ENCODE measurements at regions of chr1 and their contacts with region 1.

Region 1: DNA sequence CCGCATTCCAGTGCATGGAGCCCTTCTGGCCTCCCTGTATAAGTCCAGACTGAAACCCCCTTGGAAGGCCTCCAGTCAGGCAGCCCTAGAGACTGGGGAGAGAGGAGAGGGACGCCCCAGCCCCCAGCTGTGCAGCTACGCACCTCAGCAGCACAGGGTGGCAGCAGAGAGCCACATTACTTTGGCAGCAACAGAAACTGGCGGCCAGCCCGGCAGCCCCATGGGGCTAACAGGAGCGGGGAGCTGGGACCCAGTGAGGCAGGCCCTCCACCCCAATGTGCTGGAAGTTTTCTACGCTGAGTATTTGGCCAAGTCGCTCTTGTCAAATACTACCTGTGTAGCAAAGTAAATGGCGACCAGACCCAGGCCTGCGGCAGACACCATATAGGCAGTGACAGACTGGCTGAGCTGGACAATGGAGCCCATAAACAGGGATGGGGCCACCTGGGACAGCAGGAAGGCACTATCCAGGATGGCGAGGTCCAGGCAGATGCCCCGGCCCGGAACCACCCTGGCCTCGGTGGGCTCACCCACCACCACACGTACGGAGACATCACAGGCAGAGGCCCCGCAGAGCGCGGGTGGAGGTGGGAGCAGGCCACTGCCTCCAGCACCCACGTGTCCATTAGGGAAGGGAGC is 21.2 kb downstream of the SLC45A3 start:
- DNase-seq: peak; percentile 70
- H3K4me3 ChIP-seq: no peak overlapping the region
- H3K27ac ChIP-seq: no peak overlapping the region
- H3K4me1 ChIP-seq: peaks cover 16% of the 10 kb centered on the region
- H3K27me3 ChIP-seq: no peaks in the 10 kb centered on the region
- CTCF ChIP-seq: peak; percentile 89 to 91
- POLR2A ChIP-seq: no peak

Region 2: DNA sequence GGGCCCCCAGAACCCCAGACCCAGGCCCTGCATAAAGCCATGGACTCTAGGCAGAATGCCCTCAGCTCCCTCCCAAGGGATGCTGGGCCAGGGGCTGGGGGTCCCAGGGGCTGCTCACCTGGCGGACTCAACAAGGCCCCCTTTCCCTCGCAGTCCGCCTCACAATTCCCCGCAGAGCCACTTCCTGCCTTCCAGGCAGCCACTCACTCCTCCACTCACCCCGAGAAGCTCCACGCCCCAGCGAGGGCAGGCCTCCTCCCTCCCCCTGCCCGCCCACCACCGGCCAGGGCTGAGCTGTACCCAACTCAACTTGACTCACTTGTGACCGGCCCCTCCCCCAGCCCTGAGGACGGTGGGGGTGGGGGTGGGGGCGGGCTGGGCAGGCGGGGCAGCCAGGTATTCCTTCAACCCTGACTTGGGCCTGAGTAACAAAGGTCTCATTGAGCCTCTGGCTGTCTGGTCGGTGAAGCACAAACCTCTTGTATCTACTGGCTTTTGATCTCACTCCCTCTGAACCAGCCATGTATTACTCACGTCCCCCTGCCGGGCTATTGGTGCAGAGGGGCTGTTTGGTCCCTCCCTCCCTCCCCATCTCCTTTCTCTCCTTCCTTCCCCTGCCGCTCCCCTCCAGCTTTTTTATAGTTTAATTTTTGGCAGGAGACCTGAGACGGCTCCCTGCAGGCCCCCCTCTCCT is 209.2 kb before region 1 on chr1:
- CTCF ChIA-PET with region 1: no interaction called
- POLR2A ChIA-PET with region 1: no interaction called
- dilution Hi-C with region 1: no loop called
- intact Hi-C with region 1: no loop called
- DNase-seq: no peak
- H3K4me3 ChIP-seq: no peak overlapping the region
- H3K27ac ChIP-seq: no peak overlapping the region
- H3K4me1 ChIP-seq: no peaks in the 10 kb centered on the region
- H3K27me3 ChIP-seq: peaks cover 42 to 44% of the 10 kb centered on the region in 2 experiments
- CTCF ChIP-seq: no peak
- POLR2A ChIP-seq: no peak

Region 3: DNA sequence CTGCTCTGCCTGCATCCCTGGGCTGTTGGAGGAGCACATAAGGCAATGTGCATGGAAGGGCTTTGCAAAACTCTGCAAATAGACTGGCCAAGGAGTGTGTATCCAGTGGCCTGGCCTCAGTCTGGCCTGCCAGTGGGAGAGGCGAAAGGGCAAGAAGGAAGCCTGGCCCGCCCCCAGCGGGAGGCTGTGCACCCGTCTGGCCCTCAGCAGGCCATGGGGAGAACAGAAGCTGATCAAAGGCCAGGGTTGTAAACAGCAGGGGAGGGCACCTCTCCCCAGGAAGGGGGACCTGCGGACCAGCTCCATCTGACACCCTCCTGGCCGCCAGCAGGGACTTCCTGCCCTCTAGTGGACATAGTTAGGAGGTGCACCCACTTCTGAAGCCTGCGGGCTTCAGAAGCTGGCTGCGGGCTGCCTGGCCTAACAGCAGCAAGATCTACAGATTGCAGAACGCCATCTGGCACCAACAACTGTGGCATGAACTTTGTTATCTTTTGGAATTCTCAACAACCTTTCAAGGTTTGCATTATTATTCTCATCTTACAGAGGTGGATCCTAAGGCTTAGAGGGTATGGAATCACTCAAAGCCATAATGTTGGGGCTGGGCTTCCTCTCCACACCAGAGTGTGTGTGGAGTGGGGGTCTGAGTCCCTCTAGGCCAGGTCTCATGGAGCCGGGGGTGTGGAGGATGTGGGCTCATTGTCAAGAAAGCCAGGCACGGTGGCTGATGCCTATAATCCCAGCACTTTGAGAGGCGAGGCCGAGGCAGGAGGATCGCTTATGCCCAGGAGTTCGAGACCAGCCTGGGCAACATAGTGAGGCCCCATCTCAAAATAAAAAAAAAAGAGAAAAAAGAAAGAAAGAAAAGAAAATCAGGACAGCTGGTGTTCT is 173.5 kb before region 1 on chr1:
- CTCF ChIA-PET with region 1: interaction called, 33 read pairs
- POLR2A ChIA-PET with region 1: no interaction called
- dilution Hi-C with region 1: no loop called
- intact Hi-C with region 1: loop called (anchors 1 kb)
- DNase-seq: peak; percentile 55
- H3K4me3 ChIP-seq: no peak overlapping the region
- H3K27ac ChIP-seq: no peak overlapping the region
- H3K4me1 ChIP-seq: no peaks in the 10 kb centered on the region
- H3K27me3 ChIP-seq: peaks cover 7 to 13% of the 10 kb centered on the region in 2 experiments
- CTCF ChIP-seq: peak; percentile 85 to 96
- POLR2A ChIP-seq: no peak

Region 4: GRCh38 chr1:205578780-205579606 is 80.1 kb before region 1 on chr1:
- CTCF ChIA-PET with region 1: interaction called, 23 read pairs
- POLR2A ChIA-PET with region 1: no interaction called
- dilution Hi-C with region 1: no loop called
- intact Hi-C with region 1: no loop called
- DNase-seq: no peak
- H3K4me3 ChIP-seq: no peak overlapping the region
- H3K27ac ChIP-seq: no peak overlapping the region
- H3K4me1 ChIP-seq: peaks cover 19% of the 10 kb centered on the region
- H3K27me3 ChIP-seq: peaks cover 10 to 19% of the 10 kb centered on the region in 2 experiments
- CTCF ChIP-seq: no peak
- POLR2A ChIP-seq: no peak

Region 5: GRCh38 chr1:205600085-205600484 is 59.0 kb before region 1 on chr1:
- CTCF ChIA-PET with region 1: interaction called, 615 read pairs
- POLR2A ChIA-PET with region 1: interaction called, 8 read pairs
- dilution Hi-C with region 1: no loop called
- intact Hi-C with region 1: no loop called
- DNase-seq: peak; percentile 94
- H3K4me3 ChIP-seq: peak overlapping the region in 1 of 3 experiments; percentile 12
- H3K27ac ChIP-seq: peak overlapping the region; percentile 98
- H3K4me1 ChIP-seq: peaks cover 41% of the 10 kb centered on the region
- H3K27me3 ChIP-seq: no peaks in the 10 kb centered on the region
- CTCF ChIP-seq: peak; percentile 16 to 23
- POLR2A ChIP-seq: no peak

Region 6: GRCh38 chr1:205680073-205680851 is 21.2 kb after region 1 on chr1 and contains the start of gene SLC45A3:
- CTCF ChIA-PET with region 1: interaction called, 90 read pairs
- POLR2A ChIA-PET with region 1: interaction called, 4 read pairs
- dilution Hi-C with region 1: no loop called
- intact Hi-C with region 1: loop called (anchors 2 kb)
- DNase-seq: no peak
- H3K4me3 ChIP-seq: peak within 1 kb of the TSS; percentile 66 to 82 (median 72)
- H3K27ac ChIP-seq: peak within 1 kb of the TSS; percentile 95
- H3K4me1 ChIP-seq: peaks cover 19% of the 10 kb centered on the region
- H3K27me3 ChIP-seq: no peaks in the 10 kb centered on the region
- CTCF ChIP-seq: no peak
- POLR2A ChIP-seq: no peak
- total RNA-seq, gene SLC45A3: 15.6 and 16.9 TPM in 2 replicates

Region 7: GRCh38 chr1:205711104-205712020 is 52.3 kb after region 1 on chr1:
- CTCF ChIA-PET with region 1: interaction called, 908 read pairs
- POLR2A ChIA-PET with region 1: interaction called, 11 read pairs
- dilution Hi-C with region 1: no loop called
- intact Hi-C with region 1: loop called (anchors 1 kb)
- DNase-seq: peak; percentile 88
- H3K4me3 ChIP-seq: no peak overlapping the region
- H3K27ac ChIP-seq: peak overlapping the region; percentile 44
- H3K4me1 ChIP-seq: peaks cover 12% of the 10 kb centered on the region
- H3K27me3 ChIP-seq: no peaks in the 10 kb centered on the region
- CTCF ChIP-seq: peak; percentile 67 to 70
- POLR2A ChIP-seq: no peak

Region 8: DNA sequence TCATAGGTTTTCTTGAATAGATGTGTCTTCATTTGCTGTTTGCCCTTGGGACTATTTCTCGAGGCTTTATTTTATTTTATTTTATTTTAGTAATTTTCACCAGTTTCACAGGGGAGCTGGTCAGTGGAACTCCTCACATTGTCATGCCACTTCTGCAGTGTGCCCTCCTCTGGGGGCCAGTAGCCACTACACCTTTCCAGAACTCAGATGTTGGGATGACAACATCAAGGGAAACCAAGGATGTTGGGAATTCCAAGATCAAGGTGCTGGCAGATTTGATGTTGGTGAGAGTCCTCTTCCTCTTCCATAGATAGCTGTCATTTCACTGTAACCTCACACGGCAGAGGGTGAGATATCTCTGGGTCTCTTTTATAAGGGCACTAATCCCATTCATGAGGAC is 248.7 kb after region 1 on chr1:
- CTCF ChIA-PET with region 1: interaction called, 43 read pairs
- POLR2A ChIA-PET with region 1: no interaction called
- dilution Hi-C with region 1: no loop called
- intact Hi-C with region 1: loop called (anchors 1 kb)
- DNase-seq: peak; percentile 46
- H3K4me3 ChIP-seq: no peak overlapping the region
- H3K27ac ChIP-seq: no peak overlapping the region
- H3K4me1 ChIP-seq: no peaks in the 10 kb centered on the region
- H3K27me3 ChIP-seq: peaks cover 5 to 9% of the 10 kb centered on the region in 2 experiments
- CTCF ChIP-seq: peak; percentile 65 to 75
- POLR2A ChIP-seq: no peak

Measured in endothelial cell of umbilical vein (primary cell).